Natural killer cell (primary cell): ENCODE measurements at regions of chr13 and their contacts with region 1.

Region 1: GRCh38 chr13:73984949-73985691 is 149.1 kb downstream of the KLF12 start:
- DNase-seq: peak in 1 of 2 donors; percentile 92
- ATAC-seq: peak in 1 of 3 donors; percentile 52
- H3K4me3 ChIP-seq: no peak overlapping the region
- H3K4me3 Mint-ChIP-seq: peak overlapping the region; percentile 73
- H3K27ac ChIP-seq: no peak overlapping the region
- H3K27ac Mint-ChIP-seq: peak overlapping the region; percentile 80 to 83
- H3K4me1 ChIP-seq: peaks cover 9% of the 10 kb centered on the region
- H3K4me1 Mint-ChIP-seq: peaks cover 37% of the 10 kb centered on the region in 2 donors
- H3K27me3 ChIP-seq: no peaks in the 10 kb centered on the region
- H3K27me3 Mint-ChIP-seq: no peaks in the 10 kb centered on the region
- CTCF ChIP-seq: no peak

Region 2: DNA sequence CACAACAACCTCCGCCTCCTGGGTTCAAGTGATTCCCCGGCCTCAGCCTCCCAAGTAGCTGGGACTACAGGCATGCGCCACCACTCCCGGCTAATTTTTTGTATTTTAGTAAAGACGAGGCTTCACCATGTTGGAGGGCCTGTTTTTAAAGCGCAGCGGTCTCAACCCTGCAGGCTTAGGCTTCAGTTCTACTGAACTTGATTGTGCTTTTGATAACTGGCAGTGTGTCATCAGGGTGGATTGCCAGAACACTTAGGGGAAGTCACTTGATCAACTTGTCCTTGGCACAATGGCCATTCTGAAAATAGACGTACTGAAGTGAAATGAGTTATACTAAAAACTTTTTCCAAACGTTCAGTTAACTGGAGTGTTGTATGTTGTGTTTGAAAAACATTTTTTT is 454.1 kb before region 1 on chr13:
- intact Hi-C with region 1: no loop called
- DNase-seq: no peak
- ATAC-seq: peak in 1 of 3 donors; percentile 68
- H3K4me3 ChIP-seq: no peak overlapping the region
- H3K4me3 Mint-ChIP-seq: no peak overlapping the region
- H3K27ac ChIP-seq: no peak overlapping the region
- H3K27ac Mint-ChIP-seq: no peak overlapping the region
- H3K4me1 ChIP-seq: no peaks in the 10 kb centered on the region
- H3K4me1 Mint-ChIP-seq: no peaks in the 10 kb centered on the region
- H3K27me3 ChIP-seq: no peaks in the 10 kb centered on the region
- H3K27me3 Mint-ChIP-seq: no peaks in the 10 kb centered on the region
- CTCF ChIP-seq: no peak

Region 3: DNA sequence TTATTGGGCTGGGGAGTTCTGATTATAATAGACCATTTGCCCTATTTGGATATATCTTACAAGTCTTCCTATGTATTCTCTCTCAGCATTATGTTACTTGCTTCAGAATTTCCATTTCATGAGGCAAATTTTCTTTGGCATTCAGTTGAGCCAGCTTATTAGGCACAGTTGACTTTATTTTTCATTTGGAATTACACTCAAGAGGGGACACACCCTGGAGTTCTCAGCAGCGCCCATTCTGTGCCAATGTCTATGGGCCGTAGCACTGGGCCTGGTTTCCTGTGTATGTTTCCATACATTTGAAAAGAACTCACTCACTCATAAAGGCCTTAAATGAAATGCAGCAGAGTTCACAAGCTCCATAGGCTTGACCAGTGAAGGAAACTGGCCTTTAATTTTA is 10.6 kb after region 1 on chr13:
- intact Hi-C with region 1: loop called (anchors 1 kb)
- DNase-seq: no peak
- ATAC-seq: no peak
- H3K4me3 ChIP-seq: no peak overlapping the region
- H3K4me3 Mint-ChIP-seq: no peak overlapping the region
- H3K27ac ChIP-seq: no peak overlapping the region
- H3K27ac Mint-ChIP-seq: peak overlapping the region in 1 of 2 donors; percentile 47
- H3K4me1 ChIP-seq: no peaks in the 10 kb centered on the region
- H3K4me1 Mint-ChIP-seq: peaks cover 74 to 79% of the 10 kb centered on the region in 2 donors
- H3K27me3 ChIP-seq: no peaks in the 10 kb centered on the region
- H3K27me3 Mint-ChIP-seq: no peaks in the 10 kb centered on the region
- CTCF ChIP-seq: no peak